ENCODE measurements at regions of chr7 and their contacts with region 1.

Region 1: DNA sequence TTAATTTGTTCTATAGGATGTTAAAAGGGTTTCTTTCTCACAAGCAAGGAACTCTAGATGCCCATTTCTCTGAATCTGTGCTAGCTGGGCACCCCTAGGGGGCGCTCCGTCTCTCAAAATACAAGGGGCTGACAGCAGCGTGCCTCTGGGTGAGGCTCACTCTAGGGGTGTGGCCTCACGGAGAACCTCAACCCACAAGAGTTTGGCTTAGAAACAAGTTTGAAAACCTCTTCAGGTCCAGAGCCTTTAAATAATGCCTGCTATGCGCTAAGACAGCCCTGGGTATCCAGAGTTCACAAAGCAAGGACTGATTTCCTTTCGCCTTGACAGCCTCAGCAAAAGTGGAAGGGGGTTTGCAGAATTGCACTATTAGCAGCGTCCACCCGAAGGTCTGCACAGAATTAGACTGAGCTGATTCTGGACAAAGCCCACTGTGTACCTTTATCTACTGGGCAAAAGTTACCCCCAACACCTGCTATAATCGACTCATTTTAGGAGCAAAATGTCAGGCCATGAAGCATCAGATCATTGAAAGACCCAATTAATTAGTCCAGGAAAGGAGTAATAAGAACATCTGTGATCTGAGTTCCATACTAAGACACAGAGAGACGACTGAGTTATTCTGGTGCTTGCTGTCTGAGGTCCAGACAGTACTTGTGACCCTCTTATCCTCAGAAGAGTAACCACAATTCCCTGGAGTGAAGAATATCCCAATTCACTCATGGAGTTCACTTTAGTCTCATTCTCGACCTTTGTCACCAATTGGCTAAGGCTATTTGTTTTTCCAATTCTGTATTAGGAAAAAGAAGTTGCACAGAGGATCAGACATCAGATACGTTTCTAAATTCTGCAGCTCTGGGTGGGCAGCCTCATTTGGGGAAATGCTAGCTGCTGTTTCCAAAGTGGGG is 574 bp upstream of the CPED1 start:
- DNase-seq: peak; percentile 89
- H3K4me3 Mint-ChIP-seq: peak overlapping the region; percentile 71
- H3K27ac Mint-ChIP-seq: no peak overlapping the region
- H3K4me1 Mint-ChIP-seq: peaks cover 14% of the 10 kb centered on the region
- H3K27me3 Mint-ChIP-seq: peaks cover 43% of the 10 kb centered on the region

Region 2: DNA sequence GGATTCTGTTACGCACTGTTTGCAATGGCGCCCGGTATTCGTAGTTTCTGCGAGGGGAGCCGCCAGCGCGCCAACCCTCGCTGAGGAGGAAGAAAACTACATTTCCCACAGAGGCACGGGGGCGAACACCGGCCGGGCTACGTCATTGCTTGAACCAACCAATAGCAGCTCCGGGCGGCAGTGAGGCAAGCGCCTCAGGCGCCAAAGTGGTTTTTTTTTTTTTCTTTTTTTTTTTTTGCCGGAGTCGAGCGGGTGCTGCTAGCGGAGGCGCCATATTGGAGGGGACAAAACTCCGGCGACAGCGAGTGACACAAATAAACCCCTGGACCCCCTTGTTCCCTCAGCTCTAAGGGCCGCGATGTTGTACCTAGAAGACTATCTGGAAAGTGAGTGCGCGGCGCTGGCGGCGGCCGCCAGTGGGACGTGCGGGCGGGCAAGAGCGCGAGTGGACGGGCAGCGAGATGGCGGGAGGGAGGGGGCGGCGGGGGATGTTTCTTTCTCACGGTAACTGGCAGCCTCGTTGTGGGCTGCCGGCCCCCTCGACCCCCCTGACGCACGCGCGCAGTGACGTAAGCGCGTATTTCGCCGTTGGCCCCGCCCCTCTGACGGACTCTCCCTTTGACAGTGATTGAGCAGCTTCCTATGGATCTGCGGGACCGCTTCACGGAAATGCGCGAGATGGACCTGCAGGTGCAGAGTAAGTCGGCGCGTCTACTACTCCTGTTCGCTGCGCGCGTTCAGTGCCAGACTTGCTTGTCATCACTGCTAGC is 37.2 kb before region 1 on chr7 and contains the start of gene ING3:
- CTCF ChIA-PET with region 1: interaction called, 3 read pairs
- intact Hi-C with region 1: loop called (anchors 1 kb)
- DNase-seq: peak; percentile 97
- H3K4me3 Mint-ChIP-seq: peak within 1 kb of the TSS; percentile 97
- H3K27ac Mint-ChIP-seq: peak within 1 kb of the TSS; percentile 97
- H3K4me1 Mint-ChIP-seq: peaks cover 17% of the 10 kb centered on the region
- H3K27me3 Mint-ChIP-seq: peaks cover 3% of the 10 kb centered on the region
- total RNA-seq, gene ING3: 25.0 to 26.7 TPM

Region 3: DNA sequence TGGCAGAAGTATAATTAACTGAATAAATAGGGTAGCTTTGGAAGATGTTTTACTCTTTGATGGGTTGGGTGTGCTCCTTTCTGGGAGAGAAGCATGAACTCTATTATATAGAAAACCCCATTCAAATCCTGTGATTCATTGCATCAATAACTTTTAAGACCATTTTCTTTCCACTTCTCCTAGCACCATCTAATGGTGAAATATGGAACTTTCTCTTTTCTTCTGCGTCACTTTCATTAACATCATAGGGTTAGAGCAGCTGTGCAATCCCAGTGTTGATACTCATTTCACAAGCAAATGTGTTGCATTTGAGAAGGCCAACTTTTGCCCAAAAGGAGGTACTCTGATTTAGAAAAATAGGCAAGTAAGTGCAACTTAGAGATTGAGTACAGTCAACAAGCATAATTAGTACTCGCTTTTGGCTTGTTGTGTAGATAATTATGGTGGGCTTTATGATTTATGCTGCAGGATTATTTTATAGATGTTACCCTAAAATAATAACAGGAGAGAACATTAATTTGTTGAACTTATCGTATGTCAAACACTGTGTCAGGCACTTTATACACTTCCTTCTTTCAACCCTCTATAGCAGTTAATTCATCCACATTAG is 93.5 kb after region 1 on chr7:
- CTCF ChIA-PET with region 1: interaction called, 36 read pairs
- intact Hi-C with region 1: loop called (anchors 1 kb)
- DNase-seq: no peak
- H3K4me3 Mint-ChIP-seq: no peak overlapping the region
- H3K27ac Mint-ChIP-seq: no peak overlapping the region
- H3K4me1 Mint-ChIP-seq: no peaks in the 10 kb centered on the region
- H3K27me3 Mint-ChIP-seq: peaks cover 6% of the 10 kb centered on the region

Region 4: GRCh38 chr7:121107923-121108498 is 120.1 kb after region 1 on chr7:
- CTCF ChIA-PET with region 1: interaction called, 30 read pairs
- intact Hi-C with region 1: loop called (anchors 1 kb)
- DNase-seq: no peak
- H3K4me3 Mint-ChIP-seq: no peak overlapping the region
- H3K27ac Mint-ChIP-seq: no peak overlapping the region
- H3K4me1 Mint-ChIP-seq: no peaks in the 10 kb centered on the region
- H3K27me3 Mint-ChIP-seq: peaks cover 11% of the 10 kb centered on the region

Region 5: GRCh38 chr7:121337398-121337797 is 349.5 kb after region 1 on chr7:
- CTCF ChIA-PET with region 1: no interaction called
- intact Hi-C with region 1: loop called (anchors 1 kb)
- DNase-seq: peak; percentile 9
- H3K4me3 Mint-ChIP-seq: no peak overlapping the region
- H3K27ac Mint-ChIP-seq: no peak overlapping the region
- H3K4me1 Mint-ChIP-seq: no peaks in the 10 kb centered on the region
- H3K27me3 Mint-ChIP-seq: peaks cover 4% of the 10 kb centered on the region